ENCODE measurements at regions of chr19 and their contacts with region 1.

Region 1: DNA sequence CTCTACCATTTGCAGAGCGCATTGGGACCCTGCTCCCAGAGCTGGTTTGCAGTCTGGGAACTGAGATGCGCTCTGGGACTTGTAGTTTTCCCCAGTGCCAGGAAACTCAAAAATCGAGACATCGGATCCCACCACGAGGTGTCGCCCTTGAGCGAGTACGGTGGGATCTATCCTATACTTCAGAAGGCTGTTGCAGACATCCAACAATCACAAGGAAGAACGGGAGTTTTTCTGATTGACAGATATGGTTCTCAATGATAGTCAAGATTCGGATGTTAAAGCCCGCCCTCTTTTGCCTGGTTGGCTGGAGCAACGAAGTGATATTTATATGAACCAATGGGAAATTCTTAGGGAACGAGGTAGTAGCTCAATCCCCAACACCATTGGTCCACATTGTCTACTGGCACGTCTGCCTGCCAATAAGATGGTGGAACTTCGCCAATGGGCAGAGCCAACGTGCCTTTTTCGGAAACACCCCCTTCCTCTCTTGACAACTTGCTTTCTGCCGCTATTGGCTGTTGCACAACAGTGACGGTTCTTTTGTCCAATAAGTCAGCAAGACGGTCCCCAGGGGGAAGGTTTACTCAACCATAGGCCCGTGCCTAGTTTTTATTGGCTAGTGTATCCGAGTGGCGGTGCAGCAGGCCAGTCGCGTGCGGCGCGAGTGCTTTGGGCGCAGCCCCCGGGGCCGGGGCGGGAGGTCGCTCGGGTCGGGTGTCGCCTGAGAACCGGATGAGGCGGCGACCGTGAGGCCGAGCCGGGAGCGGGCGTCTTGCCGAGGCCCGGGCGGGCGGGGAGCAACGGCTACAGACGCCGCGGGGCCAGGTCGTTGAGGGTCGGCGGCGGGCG is at the start of gene DNM2:
- DNase-seq: peak; percentile 99
- ATAC-seq: peak; percentile 92
- total RNA-seq, gene DNM2: 201 TPM

Region 2: GRCh38 chr19:10670182-10670581 is 47.4 kb before region 1 on chr19:
- intact Hi-C with region 1: no loop called
- DNase-seq: no peak
- ATAC-seq: peak; percentile 62

Region 3: GRCh38 chr19:10864538-10864899 is 146.9 kb after region 1 on chr19:
- intact Hi-C with region 1: loop called (anchors 10 kb)
- DNase-seq: peak; percentile 91
- ATAC-seq: peak; percentile 83

Measured in left ventricle myocardium superior (tissue), 1 donor.